ENCODE measurements at regions of chr14 and their contacts with region 1.

Region 1: DNA sequence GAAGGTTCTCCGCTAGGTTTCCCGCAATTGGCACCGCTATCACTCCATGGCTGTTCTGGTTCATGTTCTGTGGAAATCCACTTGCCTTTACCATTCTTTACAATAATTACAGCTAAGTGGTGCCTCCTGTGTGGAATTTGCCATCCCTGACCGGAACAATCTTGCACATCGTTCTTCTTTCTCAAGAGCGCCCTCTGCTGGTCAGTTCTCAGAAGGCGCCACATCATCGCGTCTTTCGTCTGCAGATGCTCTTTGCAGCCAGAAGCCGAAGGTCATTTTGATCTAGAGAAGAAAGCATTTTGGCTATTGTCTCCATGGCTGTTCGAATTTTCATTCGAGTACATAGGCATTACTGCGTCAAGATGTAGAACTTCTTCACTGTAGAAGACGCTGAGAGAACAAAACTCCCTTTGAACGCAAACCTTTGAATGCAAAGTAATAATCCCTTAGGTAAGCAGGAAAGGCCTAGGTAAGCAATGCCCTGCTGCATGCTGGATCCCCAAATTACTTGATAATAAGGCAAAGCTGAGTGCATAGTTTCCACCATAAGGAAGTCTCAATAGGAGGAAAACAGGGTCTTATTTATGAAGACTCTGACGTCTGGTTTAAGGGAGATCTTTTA is 10.1 kb upstream of the RTRAF start:
- DNase-seq: peak; percentile 62
- ATAC-seq: peak; percentile 85
- H3K4me3 ChIP-seq: no peak overlapping the region
- H3K27ac ChIP-seq: no peak overlapping the region
- H3K4me1 ChIP-seq: no peaks in the 10 kb centered on the region
- H3K27me3 ChIP-seq: peaks cover 0 to 19% of the 10 kb centered on the region in 2 experiments; a peak in 3 of 5 replicates
- CTCF ChIP-seq: peak; percentile 84
- EP300 ChIP-seq: no peak
- POLR2A ChIP-seq: no peak
- RAD21 ChIP-seq: no peak

Region 2: GRCh38 chr14:51283402-51284085 is 695.7 kb before region 1 on chr14:
- CTCF ChIA-PET with region 1: interaction called, 4 read pairs
- POLR2A ChIA-PET with region 1: no interaction called
- in situ Hi-C with region 1: no loop called
- intact Hi-C with region 1: loop called (anchors 2 kb)
- DNase-seq: peak; percentile 74
- ATAC-seq: peak; percentile 77
- H3K4me3 ChIP-seq: no peak overlapping the region
- H3K27ac ChIP-seq: no peak overlapping the region
- H3K4me1 ChIP-seq: no peaks in the 10 kb centered on the region
- H3K27me3 ChIP-seq: no peaks in the 10 kb centered on the region
- CTCF ChIP-seq: peak; percentile 68
- EP300 ChIP-seq: no peak
- POLR2A ChIP-seq: no peak
- RAD21 ChIP-seq: peak; percentile 58; the same call in 1 of the 2 replicates

Region 3: DNA sequence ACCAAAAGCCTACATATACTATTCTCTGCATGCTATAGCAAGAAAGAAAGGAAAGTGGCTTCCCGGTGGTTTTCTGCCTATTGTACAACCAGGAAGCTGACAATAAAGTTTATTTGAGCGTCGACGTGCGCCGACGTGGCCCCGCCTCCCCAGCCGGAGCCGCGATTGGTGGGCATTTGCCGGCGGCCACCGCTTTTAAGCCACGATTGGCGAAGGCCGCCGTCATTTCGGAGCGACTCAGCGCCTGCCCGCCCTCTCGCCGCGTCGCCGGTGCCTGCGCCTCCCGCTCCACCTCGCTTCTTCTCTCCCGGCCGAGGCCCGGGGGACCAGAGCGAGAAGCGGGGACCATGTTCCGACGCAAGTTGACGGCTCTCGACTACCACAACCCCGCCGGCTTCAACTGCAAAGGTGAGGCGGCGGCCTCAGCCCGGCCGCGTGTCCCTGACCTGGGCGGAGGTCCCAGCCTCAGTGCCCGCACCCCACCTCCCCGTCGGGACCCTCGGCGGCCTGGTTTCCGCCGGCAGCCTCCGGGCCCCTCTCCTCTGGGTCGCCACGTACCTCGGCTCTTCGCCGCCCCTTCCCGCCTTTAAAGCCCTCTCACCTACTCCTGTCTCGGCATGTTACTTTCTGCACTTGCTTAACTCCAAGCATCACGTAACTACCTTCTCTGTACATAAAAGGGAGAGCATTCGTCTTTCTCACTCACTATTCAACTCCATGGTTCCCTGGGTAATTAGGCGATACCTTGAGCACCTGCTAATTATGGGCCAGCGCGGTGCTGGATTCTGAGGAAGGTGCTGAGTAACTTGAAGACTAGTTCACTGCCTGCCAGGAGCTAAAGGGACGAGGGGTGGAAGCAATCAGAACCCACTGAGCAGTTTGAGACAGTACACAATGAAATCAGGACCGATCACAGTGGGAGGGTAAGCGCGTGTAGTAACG is 10.4 kb after region 1 on chr14 and contains the start of gene RTRAF:
- CTCF ChIA-PET with region 1: no interaction called
- POLR2A ChIA-PET with region 1: no interaction called
- in situ Hi-C with region 1: no loop called
- intact Hi-C with region 1: loop called (anchors 1 kb)
- DNase-seq: peak; percentile 81
- ATAC-seq: peak; percentile 99
- H3K4me3 ChIP-seq: peak within 1 kb of the TSS; percentile 91 to 99 (median 95)
- H3K27ac ChIP-seq: peak within 1 kb of the TSS; percentile 85
- H3K4me1 ChIP-seq: peaks cover 27% of the 10 kb centered on the region
- H3K27me3 ChIP-seq: no peaks in the 10 kb centered on the region; a peak in 1 of 5 replicates
- CTCF ChIP-seq: no peak
- EP300 ChIP-seq: no peak
- POLR2A ChIP-seq: peak; percentile 81 to 84
- RAD21 ChIP-seq: no peak
- total RNA-seq, gene RTRAF: 258 and 374 TPM in 2 replicates